Naive thymus-derived CD4-positive, alpha-beta T cell (primary cell): ENCODE measurements at regions of chr1 and their contacts with region 1.

Region 1: GRCh38 chr1:239719642-239720258 is 333.4 kb downstream of the CHRM3 start:
- DNase-seq: peak in 8 of 9 donors; percentile 47 to 88 (median 84)
- ATAC-seq: peak; percentile 90
- H3K4me3 ChIP-seq: peak overlapping the region; percentile 70
- H3K4me3 Mint-ChIP-seq: no peak overlapping the region
- H3K27ac ChIP-seq: peak overlapping the region; percentile 80
- H3K27ac Mint-ChIP-seq: peak overlapping the region in 1 of 9 donors; percentile 96
- H3K4me1 ChIP-seq: peaks cover 17 to 38% of the 10 kb centered on the region in 2 donors
- H3K4me1 Mint-ChIP-seq: peaks cover 29 to 44% (median 39%) of the 10 kb centered on the region in 7 donors
- H3K27me3 ChIP-seq: no peaks in the 10 kb centered on the region
- H3K27me3 Mint-ChIP-seq: no peaks in the 10 kb centered on the region

Region 2: GRCh38 chr1:239413916-239414315 is 305.8 kb before region 1 on chr1:
- CTCF ChIA-PET with region 1: no interaction called
- POLR2A ChIA-PET with region 1: no interaction called
- intact Hi-C with region 1: loop called in 1 of 2 experiments (anchors 5 kb)
- DNase-seq: no peak
- ATAC-seq: no peak
- H3K4me3 ChIP-seq: no peak overlapping the region
- H3K4me3 Mint-ChIP-seq: no peak overlapping the region
- H3K27ac ChIP-seq: no peak overlapping the region
- H3K27ac Mint-ChIP-seq: peak overlapping the region in 2 of 9 donors; percentile 65 to 87
- H3K4me1 ChIP-seq: no peaks in the 10 kb centered on the region
- H3K4me1 Mint-ChIP-seq: no peaks in the 10 kb centered on the region
- H3K27me3 ChIP-seq: no peaks in the 10 kb centered on the region
- H3K27me3 Mint-ChIP-seq: no peaks in the 10 kb centered on the region

Region 3: GRCh38 chr1:239547987-239548386 is 171.8 kb before region 1 on chr1:
- CTCF ChIA-PET with region 1: no interaction called
- POLR2A ChIA-PET with region 1: no interaction called
- intact Hi-C with region 1: loop called (anchors 2 to 5 kb)
- DNase-seq: peak in 6 of 9 donors; percentile 2 to 24 (median 18)
- ATAC-seq: peak; percentile 58
- H3K4me3 ChIP-seq: peak overlapping the region; percentile 36
- H3K4me3 Mint-ChIP-seq: peak overlapping the region; percentile 69 to 90 (median 84)
- H3K27ac ChIP-seq: peak overlapping the region; percentile 53
- H3K27ac Mint-ChIP-seq: peak overlapping the region; percentile 45 to 93 (median 87)
- H3K4me1 ChIP-seq: no peaks in the 10 kb centered on the region
- H3K4me1 Mint-ChIP-seq: peaks cover 6 to 23% (median 18%) of the 10 kb centered on the region in 7 donors
- H3K27me3 ChIP-seq: no peaks in the 10 kb centered on the region
- H3K27me3 Mint-ChIP-seq: no peaks in the 10 kb centered on the region

Region 4: GRCh38 chr1:239706245-239706892 is 13.4 kb before region 1 on chr1:
- CTCF ChIA-PET with region 1: interaction called, 4 read pairs
- POLR2A ChIA-PET with region 1: interaction called, 60 read pairs
- intact Hi-C with region 1: loop called (anchors 1 kb)
- DNase-seq: no peak
- ATAC-seq: no peak
- H3K4me3 ChIP-seq: no peak overlapping the region
- H3K4me3 Mint-ChIP-seq: no peak overlapping the region
- H3K27ac ChIP-seq: no peak overlapping the region
- H3K27ac Mint-ChIP-seq: peak overlapping the region in 7 of 9 donors; percentile 15 to 82 (median 49)
- H3K4me1 ChIP-seq: no peaks in the 10 kb centered on the region
- H3K4me1 Mint-ChIP-seq: peaks cover 10 to 67% (median 41%) of the 10 kb centered on the region in 7 donors
- H3K27me3 ChIP-seq: no peaks in the 10 kb centered on the region
- H3K27me3 Mint-ChIP-seq: no peaks in the 10 kb centered on the region

Region 5: DNA sequence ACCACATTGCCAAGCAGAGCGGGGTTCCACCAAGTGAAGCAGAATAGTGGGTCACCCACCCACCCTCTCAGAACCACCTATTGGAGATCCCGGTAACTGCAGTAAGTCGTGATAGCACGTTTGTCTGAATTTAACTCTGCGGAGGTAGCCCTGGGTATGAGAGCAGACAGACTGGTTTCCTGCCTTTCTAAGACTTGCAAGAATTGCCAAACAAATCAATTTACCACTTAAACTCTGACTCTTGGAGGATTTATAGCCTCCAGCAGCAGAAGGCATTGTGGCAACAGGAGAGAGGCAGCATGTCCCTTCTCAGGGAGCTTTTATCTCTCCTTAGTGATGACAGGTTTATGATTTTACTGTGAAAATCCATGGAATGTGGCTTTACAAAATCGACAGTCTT is 84.0 kb after region 1 on chr1:
- CTCF ChIA-PET with region 1: interaction called, 11 read pairs
- POLR2A ChIA-PET with region 1: interaction called, 4 read pairs
- intact Hi-C with region 1: loop called in 1 of 2 experiments (anchors 1 kb)
- DNase-seq: no peak
- ATAC-seq: no peak
- H3K4me3 ChIP-seq: no peak overlapping the region
- H3K4me3 Mint-ChIP-seq: no peak overlapping the region
- H3K27ac ChIP-seq: no peak overlapping the region
- H3K27ac Mint-ChIP-seq: peak overlapping the region in 1 of 9 donors; percentile 4
- H3K4me1 ChIP-seq: no peaks in the 10 kb centered on the region
- H3K4me1 Mint-ChIP-seq: peaks cover 2 to 21% (median 11%) of the 10 kb centered on the region in 7 donors
- H3K27me3 ChIP-seq: no peaks in the 10 kb centered on the region
- H3K27me3 Mint-ChIP-seq: no peaks in the 10 kb centered on the region

Region 6: DNA sequence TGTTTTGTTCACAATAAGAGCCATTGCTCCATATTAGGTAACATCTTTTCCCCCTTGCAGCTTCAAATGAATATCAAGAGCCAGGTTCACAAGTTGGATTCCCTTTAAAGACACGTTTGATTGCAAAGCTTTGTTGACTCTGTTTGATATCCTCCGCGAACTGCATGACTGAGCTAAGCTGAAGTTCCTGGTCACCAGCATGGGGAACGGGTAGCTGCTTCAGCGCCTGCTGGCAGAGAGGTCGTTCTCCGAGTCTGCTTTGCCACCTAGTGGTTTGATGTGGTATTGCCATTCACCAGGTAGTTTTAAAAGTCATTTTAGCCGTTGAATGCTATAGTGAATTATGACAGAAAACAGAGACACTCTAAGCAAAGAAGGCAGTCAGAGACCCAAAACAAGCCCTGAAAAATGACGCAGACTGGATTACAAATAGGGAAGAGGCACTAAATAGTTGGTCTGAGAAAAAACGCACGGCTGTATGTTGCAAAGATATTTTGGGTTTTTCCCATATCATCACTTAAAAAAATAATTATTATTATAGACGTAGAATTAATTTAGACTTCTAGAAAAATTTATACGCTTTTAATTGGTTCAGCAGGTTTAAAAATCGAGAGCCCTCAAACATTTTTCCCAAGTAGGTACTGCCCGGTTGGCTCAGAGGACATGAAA is 178.4 kb after region 1 on chr1:
- CTCF ChIA-PET with region 1: interaction called, 3 read pairs
- POLR2A ChIA-PET with region 1: no interaction called
- intact Hi-C with region 1: loop called in 1 of 2 experiments (anchors 5 kb)
- DNase-seq: peak; percentile 41 to 76 (median 71)
- ATAC-seq: peak; percentile 96
- H3K4me3 ChIP-seq: no peak overlapping the region
- H3K4me3 Mint-ChIP-seq: peak overlapping the region in 5 of 10 donors; percentile 7 to 58 (median 36)
- H3K27ac ChIP-seq: no peak overlapping the region
- H3K27ac Mint-ChIP-seq: peak overlapping the region in 1 of 9 donors; percentile 10
- H3K4me1 ChIP-seq: no peaks in the 10 kb centered on the region
- H3K4me1 Mint-ChIP-seq: peaks cover 0 to 7% (median 2%) of the 10 kb centered on the region in 7 donors
- H3K27me3 ChIP-seq: no peaks in the 10 kb centered on the region
- H3K27me3 Mint-ChIP-seq: peaks cover 0 to 10% (median 4%) of the 10 kb centered on the region in 5 donors